Esophagus muscularis mucosa (tissue), 4 donors: ENCODE measurements at regions of chr2 and their contacts with region 1.

Region 1: DNA sequence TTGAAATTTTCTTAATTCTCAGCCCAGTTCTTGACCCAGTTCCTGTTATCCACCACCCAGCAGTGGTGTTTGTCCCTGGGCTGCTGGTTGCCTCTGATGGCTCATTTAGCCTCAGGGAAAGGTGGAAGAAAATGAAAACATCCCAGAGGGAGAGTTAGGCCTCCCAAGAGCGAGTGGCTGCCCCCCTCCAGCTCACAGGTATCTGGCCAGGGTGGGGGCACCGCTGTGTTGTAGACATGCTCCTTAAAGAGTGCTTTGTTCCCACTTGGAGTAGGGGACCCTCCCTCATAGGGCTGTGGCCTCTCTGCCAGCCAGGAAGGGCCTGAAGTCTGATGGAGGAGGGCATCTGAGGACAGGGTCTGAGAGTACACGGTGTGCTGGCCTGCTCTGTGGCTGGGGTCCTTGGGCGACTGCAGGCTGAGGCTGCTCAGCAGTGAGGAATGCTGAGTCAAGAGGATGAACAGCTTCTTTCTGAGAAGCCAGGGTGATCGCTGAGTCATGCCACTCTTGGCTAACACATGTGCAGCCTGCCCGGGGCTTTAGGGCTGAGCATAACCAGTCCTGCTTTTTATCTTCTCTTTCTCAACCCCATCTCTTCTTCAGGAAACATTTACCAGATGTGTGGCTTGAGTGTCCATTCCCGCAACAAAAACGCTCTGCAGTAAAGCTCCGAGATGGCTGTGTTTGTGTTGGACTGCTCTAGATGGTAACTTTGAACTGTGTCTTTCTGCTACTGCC is 72.3 kb downstream of the IL1R2 start:
- DNase-seq: peak; percentile 97
- H3K4me3 ChIP-seq: peak overlapping the region in 3 of 4 donors; percentile 1 to 23 (median 15)
- H3K27ac ChIP-seq: peak overlapping the region; percentile 82 to 92 (median 90)
- H3K4me1 ChIP-seq: peaks cover 51 to 67% (median 67%) of the 10 kb centered on the region in 4 donors
- H3K27me3 ChIP-seq: no peaks in the 10 kb centered on the region
- CTCF ChIP-seq: no peak
- EP300 ChIP-seq: peak; percentile 95
- POLR2A ChIP-seq: no peak

Region 2: GRCh38 chr2:101546376-101547058 is 517.6 kb before region 1 on chr2:
- intact Hi-C with region 1: no loop called
- DNase-seq: no peak
- H3K4me3 ChIP-seq: no peak overlapping the region
- H3K27ac ChIP-seq: no peak overlapping the region
- H3K4me1 ChIP-seq: peaks cover 0 to 7% (median 0%) of the 10 kb centered on the region in 4 donors
- H3K27me3 ChIP-seq: no peaks in the 10 kb centered on the region
- CTCF ChIP-seq: no peak
- EP300 ChIP-seq: no peak
- POLR2A ChIP-seq: no peak

Region 3: GRCh38 chr2:102050854-102051391 is 13.2 kb before region 1 on chr2:
- intact Hi-C with region 1: loop called (anchors 2 kb)
- DNase-seq: peak; percentile 96
- H3K4me3 ChIP-seq: no peak overlapping the region
- H3K27ac ChIP-seq: peak overlapping the region; percentile 79 to 92 (median 81)
- H3K4me1 ChIP-seq: peaks cover 47 to 70% (median 60%) of the 10 kb centered on the region in 4 donors
- H3K27me3 ChIP-seq: no peaks in the 10 kb centered on the region
- CTCF ChIP-seq: no peak
- EP300 ChIP-seq: peak; percentile 65
- POLR2A ChIP-seq: no peak

Region 4: GRCh38 chr2:102141970-102142828 is 78.1 kb after region 1 on chr2 and contains the start of gene IL1R1:
- intact Hi-C with region 1: loop called (anchors 5 kb)
- DNase-seq: no peak
- H3K4me3 ChIP-seq: peak within 1 kb of the TSS; percentile 66 to 80 (median 70)
- H3K27ac ChIP-seq: peak within 1 kb of the TSS; percentile 84 to 94 (median 88)
- H3K4me1 ChIP-seq: peaks cover 5 to 41% (median 27%) of the 10 kb centered on the region in 4 donors
- H3K27me3 ChIP-seq: no peaks in the 10 kb centered on the region
- CTCF ChIP-seq: no peak
- EP300 ChIP-seq: no peak
- POLR2A ChIP-seq: peak; percentile 61
- total RNA-seq, gene IL1R1: 41.5 to 157 (median 56.6) TPM